WTC11 (cell line): ENCODE measurements at regions of chr14 and their contacts with region 1.

Region 1: DNA sequence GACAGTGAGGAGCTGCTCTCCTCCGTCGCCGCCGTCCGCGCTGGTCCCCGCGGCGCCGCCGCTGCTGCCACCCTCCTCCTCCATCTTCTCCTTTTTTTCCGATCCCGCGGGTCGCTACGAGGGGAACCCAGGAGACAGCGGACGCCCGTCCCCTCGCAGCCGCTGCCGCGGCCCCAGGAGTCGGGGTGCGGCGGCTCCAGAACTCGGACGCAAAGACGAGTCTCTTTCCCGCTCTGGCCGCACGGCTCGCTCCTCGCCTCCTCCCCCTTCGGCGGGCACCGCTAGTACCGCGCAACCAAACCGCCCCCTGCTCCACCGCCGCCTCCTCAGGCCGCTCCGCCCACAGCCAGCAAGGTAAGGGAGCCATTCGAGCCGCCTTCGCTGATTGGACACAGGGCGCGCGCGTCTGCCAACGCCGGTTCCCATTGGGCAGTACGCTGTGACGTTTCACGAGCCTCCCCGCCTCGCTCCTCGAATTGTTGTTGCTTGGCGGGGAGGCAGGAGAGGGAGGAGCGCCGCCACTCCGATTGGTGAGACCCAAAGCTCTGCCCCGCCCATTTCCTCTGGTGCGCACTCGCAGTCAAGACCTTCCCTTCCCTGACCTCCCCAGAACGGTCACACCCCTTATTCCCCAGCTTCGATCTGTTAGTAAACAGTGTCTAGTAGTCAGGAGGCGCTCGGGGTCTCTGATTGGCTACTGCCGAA is at the start of gene RPS6KA5:
- DNase-seq: peak; percentile 100
- ATAC-seq: peak; percentile 91
- H3K4me3 Mint-ChIP-seq: peak within 1 kb of the TSS; percentile 76
- H3K27ac Mint-ChIP-seq: no peak within 1 kb of the TSS
- H3K4me1 Mint-ChIP-seq: 0 out of 2 replicates have a peak, but pooled peaks cover 2% of the 10 kb centered on the region
- H3K27me3 Mint-ChIP-seq: peaks cover 2% of the 10 kb centered on the region
- CTCF ChIP-seq: no peak
- total RNA-seq, gene RPS6KA5: 3.7 to 5.3 TPM (median 5.2 TPM) in 3 replicates

Region 2: DNA sequence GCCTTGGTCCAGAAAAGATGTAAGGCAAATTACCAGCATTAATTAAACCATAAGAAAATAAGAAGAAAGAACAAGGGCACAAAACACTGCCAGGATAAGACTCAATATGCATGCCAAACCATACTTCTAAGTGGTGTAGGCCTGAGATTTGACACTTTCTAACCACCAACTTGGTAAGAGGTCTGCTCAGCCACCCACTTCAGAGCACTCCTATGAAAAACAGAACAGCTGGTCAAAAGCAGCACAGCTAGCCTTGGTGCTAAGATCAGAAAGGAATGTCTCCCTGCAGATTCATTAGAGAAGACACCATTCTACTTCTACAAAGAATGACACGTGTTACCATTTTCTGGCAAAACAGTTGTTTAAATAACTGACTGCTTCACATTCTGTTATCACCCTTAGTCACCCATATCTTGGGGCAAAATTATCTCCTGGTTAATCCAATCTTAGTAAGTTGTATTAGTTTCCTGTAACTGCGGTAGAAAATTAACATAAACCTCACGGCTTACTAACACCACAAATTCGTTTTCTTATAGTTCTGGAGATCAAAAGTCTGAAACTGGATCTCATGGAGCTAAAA is 13.2 kb before region 1 on chr14:
- CTCF ChIA-PET with region 1: interaction called, 10 read pairs
- POLR2A ChIA-PET with region 1: no interaction called
- DNase-seq: no peak
- ATAC-seq: no peak
- H3K4me3 Mint-ChIP-seq: no peak overlapping the region
- H3K27ac Mint-ChIP-seq: no peak overlapping the region
- H3K4me1 Mint-ChIP-seq: peaks cover 2% of the 10 kb centered on the region; the same call in 1 of the 2 replicates
- H3K27me3 Mint-ChIP-seq: no peaks in the 10 kb centered on the region
- CTCF ChIP-seq: no peak

Region 3: GRCh38 chr14:91114079-91115065 is 53.9 kb after region 1 on chr14:
- CTCF ChIA-PET with region 1: interaction called, 17 read pairs
- POLR2A ChIA-PET with region 1: interaction called, 6 read pairs
- DNase-seq: peak; percentile 87
- ATAC-seq: peak; percentile 94
- H3K4me3 Mint-ChIP-seq: peak overlapping the region; percentile 73
- H3K27ac Mint-ChIP-seq: peak overlapping the region; percentile 99
- H3K4me1 Mint-ChIP-seq: peaks cover 62% of the 10 kb centered on the region
- H3K27me3 Mint-ChIP-seq: peaks cover 3% of the 10 kb centered on the region; the same call in 1 of the 2 replicates
- CTCF ChIP-seq: no peak

Region 4: GRCh38 chr14:91138511-91139359 is 78.2 kb after region 1 on chr14:
- CTCF ChIA-PET with region 1: interaction called, 10 read pairs
- POLR2A ChIA-PET with region 1: interaction called, 4 read pairs
- DNase-seq: peak; percentile 47
- ATAC-seq: peak; percentile 43
- H3K4me3 Mint-ChIP-seq: no peak overlapping the region
- H3K27ac Mint-ChIP-seq: peak overlapping the region; percentile 54; the same call in 1 of the 2 replicates
- H3K4me1 Mint-ChIP-seq: peaks cover 18% of the 10 kb centered on the region
- H3K27me3 Mint-ChIP-seq: no peaks in the 10 kb centered on the region
- CTCF ChIP-seq: peak; percentile 29